ENCODE measurements at regions of chr5 and their contacts with region 1.

Region 1: GRCh38 chr5:80255732-80256479 is at the start of gene SERINC5:
- DNase-seq: peak; percentile 70 to 92 (median 82)
- ATAC-seq: peak; percentile 67
- H3K4me3 ChIP-seq: peak within 1 kb of the TSS; percentile 99
- H3K4me3 Mint-ChIP-seq: peak within 1 kb of the TSS; percentile 94
- H3K27ac ChIP-seq: peak within 1 kb of the TSS; percentile 88 to 89
- H3K27ac Mint-ChIP-seq: peak within 1 kb of the TSS; percentile 92
- H3K4me1 ChIP-seq: peaks cover 53% of the 10 kb centered on the region
- H3K4me1 Mint-ChIP-seq: peaks cover 66% of the 10 kb centered on the region
- H3K27me3 ChIP-seq: no peaks in the 10 kb centered on the region
- H3K27me3 Mint-ChIP-seq: no peaks in the 10 kb centered on the region
- CTCF ChIP-seq: no peak
- total RNA-seq, gene SERINC5: 115 to 123 TPM

Region 2: GRCh38 chr5:80093796-80094195 is 162.1 kb before region 1 on chr5:
- CTCF ChIA-PET with region 1: interaction called, 7 read pairs
- POLR2A ChIA-PET with region 1: interaction called, 31 read pairs
- intact Hi-C with region 1: no loop called
- DNase-seq: no peak
- ATAC-seq: no peak
- H3K4me3 ChIP-seq: no peak overlapping the region
- H3K4me3 Mint-ChIP-seq: no peak overlapping the region
- H3K27ac ChIP-seq: no peak overlapping the region
- H3K27ac Mint-ChIP-seq: peak overlapping the region; percentile 95
- H3K4me1 ChIP-seq: peaks cover 24% of the 10 kb centered on the region
- H3K4me1 Mint-ChIP-seq: peaks cover 37% of the 10 kb centered on the region
- H3K27me3 ChIP-seq: no peaks in the 10 kb centered on the region
- H3K27me3 Mint-ChIP-seq: no peaks in the 10 kb centered on the region
- CTCF ChIP-seq: no peak

Region 3: DNA sequence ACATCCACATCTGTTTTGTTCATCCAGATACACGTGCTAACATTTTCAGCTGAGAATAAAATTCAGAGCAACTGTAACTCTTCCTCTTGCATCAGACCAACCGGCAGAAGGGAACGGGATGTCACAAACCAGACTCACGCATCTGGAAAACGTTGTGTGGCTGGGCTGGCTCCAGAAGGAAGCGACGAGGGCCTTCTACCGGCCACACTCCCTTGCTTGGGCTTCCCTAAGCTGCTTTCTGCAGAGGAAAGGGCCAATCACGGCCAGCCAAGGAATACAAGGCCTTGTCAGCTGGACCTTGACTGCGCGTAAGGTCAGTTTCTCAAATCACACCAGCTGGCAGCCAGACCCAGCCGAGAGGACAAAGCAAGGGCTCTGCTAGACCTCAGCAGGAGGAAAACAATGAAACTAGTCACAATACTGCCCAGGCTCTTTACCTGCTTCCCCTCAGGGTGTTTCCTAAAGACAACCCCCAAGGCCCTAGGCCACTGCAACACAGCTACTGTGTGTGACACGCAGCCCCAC is 114.7 kb before region 1 on chr5:
- CTCF ChIA-PET with region 1: interaction called, 3 read pairs
- POLR2A ChIA-PET with region 1: interaction called, 58 read pairs
- intact Hi-C with region 1: loop called (anchors 2 to 5 kb)
- DNase-seq: peak in 2 of 14 experiments; percentile 40 to 42
- ATAC-seq: no peak
- H3K4me3 ChIP-seq: no peak overlapping the region
- H3K4me3 Mint-ChIP-seq: peak overlapping the region; percentile 84
- H3K27ac ChIP-seq: peak overlapping the region; percentile 42 to 51
- H3K27ac Mint-ChIP-seq: peak overlapping the region; percentile 95
- H3K4me1 ChIP-seq: peaks cover 60% of the 10 kb centered on the region
- H3K4me1 Mint-ChIP-seq: peaks cover 84% of the 10 kb centered on the region
- H3K27me3 ChIP-seq: no peaks in the 10 kb centered on the region
- H3K27me3 Mint-ChIP-seq: no peaks in the 10 kb centered on the region
- CTCF ChIP-seq: no peak

Region 4: GRCh38 chr5:80181618-80182211 is 74.2 kb before region 1 on chr5:
- CTCF ChIA-PET with region 1: no interaction called
- POLR2A ChIA-PET with region 1: interaction called, 120 read pairs
- intact Hi-C with region 1: loop called in 1 of 2 experiments (anchors 5 kb)
- DNase-seq: peak in 12 of 14 experiments; percentile 29 to 90 (median 53)
- ATAC-seq: peak; percentile 51
- H3K4me3 ChIP-seq: no peak overlapping the region
- H3K4me3 Mint-ChIP-seq: peak overlapping the region; percentile 71
- H3K27ac ChIP-seq: peak overlapping the region; percentile 63 to 77
- H3K27ac Mint-ChIP-seq: peak overlapping the region; percentile 94
- H3K4me1 ChIP-seq: peaks cover 82% of the 10 kb centered on the region
- H3K4me1 Mint-ChIP-seq: peaks cover 89% of the 10 kb centered on the region
- H3K27me3 ChIP-seq: no peaks in the 10 kb centered on the region
- H3K27me3 Mint-ChIP-seq: no peaks in the 10 kb centered on the region
- CTCF ChIP-seq: no peak

Region 5: GRCh38 chr5:80216753-80217596 is 38.9 kb before region 1 on chr5:
- CTCF ChIA-PET with region 1: interaction called, 7 read pairs
- POLR2A ChIA-PET with region 1: interaction called, 24 read pairs
- intact Hi-C with region 1: loop called in 1 of 2 experiments (anchors 5 kb)
- DNase-seq: peak in 2 of 14 experiments; percentile 18 to 54
- ATAC-seq: no peak
- H3K4me3 ChIP-seq: no peak overlapping the region
- H3K4me3 Mint-ChIP-seq: peak overlapping the region; percentile 67
- H3K27ac ChIP-seq: peak overlapping the region in 1 of 2 donors; percentile 8
- H3K27ac Mint-ChIP-seq: peak overlapping the region; percentile 96
- H3K4me1 ChIP-seq: peaks cover 81% of the 10 kb centered on the region
- H3K4me1 Mint-ChIP-seq: peaks cover 95% of the 10 kb centered on the region
- H3K27me3 ChIP-seq: no peaks in the 10 kb centered on the region
- H3K27me3 Mint-ChIP-seq: no peaks in the 10 kb centered on the region
- CTCF ChIP-seq: no peak

Region 6: GRCh38 chr5:80654391-80655230 is 398.7 kb after region 1 on chr5 and contains the starts of genes DHFR and MSH3:
- CTCF ChIA-PET with region 1: no interaction called
- POLR2A ChIA-PET with region 1: no interaction called
- intact Hi-C with region 1: loop called (anchors 5 to 10 kb)
- DNase-seq: peak; percentile 81 to 96 (median 86)
- ATAC-seq: peak; percentile 74
- H3K4me3 ChIP-seq: peak within 1 kb of the TSS; percentile 65
- H3K4me3 Mint-ChIP-seq: peak within 1 kb of the TSS; percentile 92
- H3K27ac ChIP-seq: peak within 1 kb of the TSS; percentile 60 to 78
- H3K27ac Mint-ChIP-seq: peak within 1 kb of the TSS; percentile 95
- H3K4me1 ChIP-seq: peaks cover 20% of the 10 kb centered on the region
- H3K4me1 Mint-ChIP-seq: peaks cover 35% of the 10 kb centered on the region
- H3K27me3 ChIP-seq: no peaks in the 10 kb centered on the region
- H3K27me3 Mint-ChIP-seq: no peaks in the 10 kb centered on the region
- CTCF ChIP-seq: no peak
- total RNA-seq, gene DHFR: 3.6 to 4.0 TPM
- total RNA-seq, gene MSH3: 11.3 to 13.0 TPM